ENCODE measurements at regions of chr2 and their contacts with region 1.

Region 1: GRCh38 chr2:182726473-182726872 is 10.4 kb downstream of the DNAJC10 start:
- DNase-seq: no peak
- ATAC-seq: peak; percentile 18
- H3K4me3 Mint-ChIP-seq: no peak overlapping the region
- H3K27ac Mint-ChIP-seq: no peak overlapping the region
- H3K4me1 Mint-ChIP-seq: peaks cover 19% of the 10 kb centered on the region
- H3K27me3 Mint-ChIP-seq: no peaks in the 10 kb centered on the region
- CTCF ChIP-seq: no peak

Region 2: GRCh38 chr2:182577816-182578215 is 148.7 kb before region 1 on chr2:
- CTCF ChIA-PET with region 1: no interaction called
- POLR2A ChIA-PET with region 1: no interaction called
- intact Hi-C with region 1: no loop called
- DNase-seq: no peak
- ATAC-seq: no peak
- H3K4me3 Mint-ChIP-seq: no peak overlapping the region
- H3K27ac Mint-ChIP-seq: no peak overlapping the region
- H3K4me1 Mint-ChIP-seq: no peaks in the 10 kb centered on the region
- H3K27me3 Mint-ChIP-seq: peaks cover 3% of the 10 kb centered on the region
- CTCF ChIP-seq: no peak

Region 3: DNA sequence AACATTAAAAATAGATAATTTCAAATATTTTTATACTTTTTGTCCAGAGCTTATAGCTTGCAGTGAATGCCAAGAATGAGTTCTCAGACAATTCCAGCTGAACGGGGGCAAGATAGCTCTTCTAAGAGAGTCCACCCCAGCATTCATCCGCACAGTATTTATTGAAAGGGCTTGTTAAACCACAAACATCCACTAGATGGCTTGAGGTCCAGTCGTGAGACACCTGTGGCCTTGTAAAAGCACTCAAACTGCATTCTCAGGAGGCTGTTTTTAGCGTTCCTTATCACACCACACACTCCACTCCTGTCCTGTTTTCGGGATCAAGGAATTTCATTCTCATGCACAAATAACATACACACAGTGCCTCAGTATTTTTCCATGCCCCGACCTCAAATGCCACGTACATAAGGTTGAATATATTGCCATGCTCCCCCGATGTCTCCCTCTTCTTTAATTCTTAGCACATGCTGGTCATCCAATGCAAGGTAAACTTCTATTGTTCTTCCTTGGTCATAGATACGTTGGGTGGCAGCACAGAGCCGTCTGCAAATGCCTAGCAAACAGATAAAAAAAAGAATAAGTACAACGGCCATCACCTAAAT is 36.9 kb after region 1 on chr2:
- CTCF ChIA-PET with region 1: interaction called, 3 read pairs
- POLR2A ChIA-PET with region 1: no interaction called
- intact Hi-C with region 1: loop called (anchors 5 kb)
- DNase-seq: no peak
- ATAC-seq: no peak
- H3K4me3 Mint-ChIP-seq: no peak overlapping the region
- H3K27ac Mint-ChIP-seq: no peak overlapping the region
- H3K4me1 Mint-ChIP-seq: no peaks in the 10 kb centered on the region
- H3K27me3 Mint-ChIP-seq: no peaks in the 10 kb centered on the region
- CTCF ChIP-seq: no peak

Region 4: GRCh38 chr2:183049420-183049819 is 322.9 kb after region 1 on chr2:
- CTCF ChIA-PET with region 1: no interaction called
- POLR2A ChIA-PET with region 1: interaction called, 10 read pairs
- intact Hi-C with region 1: no loop called
- DNase-seq: no peak
- ATAC-seq: no peak
- H3K4me3 Mint-ChIP-seq: no peak overlapping the region
- H3K27ac Mint-ChIP-seq: no peak overlapping the region
- H3K4me1 Mint-ChIP-seq: no peaks in the 10 kb centered on the region
- H3K27me3 Mint-ChIP-seq: peaks cover 25% of the 10 kb centered on the region
- CTCF ChIP-seq: no peak

Region 5: DNA sequence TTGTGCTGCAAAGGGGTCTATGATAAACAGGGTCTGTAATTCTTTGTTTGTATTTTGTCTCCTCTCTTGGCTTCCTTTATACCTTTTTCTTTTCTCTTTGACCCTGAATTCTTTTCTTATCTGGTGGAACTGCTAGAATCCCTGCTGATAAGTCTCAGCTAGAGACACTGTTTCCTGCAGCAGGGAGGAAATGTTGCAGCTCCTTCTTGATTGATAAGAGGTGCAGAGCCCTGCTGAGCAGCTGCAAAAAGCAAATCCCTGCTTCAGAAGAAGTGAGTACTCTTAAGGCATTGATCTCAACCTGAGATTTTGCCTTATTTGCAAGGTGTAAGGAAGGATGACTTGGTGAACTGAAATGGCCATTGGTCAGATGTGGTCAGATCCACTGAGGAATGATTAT is 565.6 kb after region 1 on chr2:
- CTCF ChIA-PET with region 1: no interaction called
- POLR2A ChIA-PET with region 1: no interaction called
- intact Hi-C with region 1: no loop called
- DNase-seq: no peak
- ATAC-seq: no peak
- H3K4me3 Mint-ChIP-seq: no peak overlapping the region
- H3K27ac Mint-ChIP-seq: no peak overlapping the region
- H3K4me1 Mint-ChIP-seq: no peaks in the 10 kb centered on the region
- H3K27me3 Mint-ChIP-seq: peaks cover 3% of the 10 kb centered on the region
- CTCF ChIP-seq: no peak